ENCODE measurements at regions of chr3 and their contacts with region 1.

Region 1: GRCh38 chr3:111269777-111270176 is 198.2 kb downstream of the NECTIN3 start:
- DNase-seq: no peak
- H3K4me3 ChIP-seq: no peak overlapping the region
- CTCF ChIP-seq: no peak

Region 2: DNA sequence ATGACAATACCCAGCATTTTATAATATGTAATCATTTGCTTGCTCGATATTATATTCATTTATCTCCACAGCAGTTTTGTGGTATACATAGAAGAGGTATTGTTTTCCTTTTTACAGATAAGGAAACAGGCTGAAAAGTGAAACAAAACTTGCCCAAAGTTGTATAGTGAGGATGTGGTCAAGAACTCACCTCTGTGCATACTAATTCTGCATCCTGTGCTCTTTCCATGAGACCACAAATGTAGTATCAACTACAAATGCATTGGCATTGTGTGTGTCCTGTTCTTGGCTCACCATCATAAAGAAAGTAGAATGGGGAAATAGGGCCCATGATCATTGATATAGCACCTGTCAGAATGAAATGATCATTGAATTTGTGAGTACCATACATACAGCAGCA is 30.9 kb before region 1 on chr3:
- in situ Hi-C with region 1: loop called (anchors 5 kb)
- DNase-seq: no peak
- H3K4me3 ChIP-seq: no peak overlapping the region
- CTCF ChIP-seq: no peak

Measured in astrocyte of the cerebellum (primary cell).